Activated naive CD4-positive, alpha-beta T cell treated with anti-CD3 and anti-CD28 coated beads for 36 hours (primary cell): ENCODE measurements at regions of chr15 and their contacts with region 1.

Region 1: GRCh38 chr15:62150445-62150844 is 14.6 kb downstream of the C2CD4B start:
- DNase-seq: no peak
- H3K4me3 Mint-ChIP-seq: no peak overlapping the region
- H3K27ac Mint-ChIP-seq: no peak overlapping the region
- H3K4me1 Mint-ChIP-seq: peaks cover 37% of the 10 kb centered on the region
- H3K27me3 Mint-ChIP-seq: peaks cover 4% of the 10 kb centered on the region

Region 2: GRCh38 chr15:61923173-61923572 is 227.3 kb before region 1 on chr15:
- CTCF ChIA-PET with region 1: no interaction called
- intact Hi-C with region 1: no loop called
- DNase-seq: no peak
- H3K4me3 Mint-ChIP-seq: no peak overlapping the region
- H3K27ac Mint-ChIP-seq: no peak overlapping the region
- H3K4me1 Mint-ChIP-seq: no peaks in the 10 kb centered on the region
- H3K27me3 Mint-ChIP-seq: no peaks in the 10 kb centered on the region

Region 3: GRCh38 chr15:62087671-62088352 is 62.6 kb before region 1 on chr15:
- CTCF ChIA-PET with region 1: no interaction called
- intact Hi-C with region 1: loop called (anchors 5 kb)
- DNase-seq: peak; percentile 12
- H3K4me3 Mint-ChIP-seq: no peak overlapping the region
- H3K27ac Mint-ChIP-seq: no peak overlapping the region
- H3K4me1 Mint-ChIP-seq: peaks cover 2% of the 10 kb centered on the region
- H3K27me3 Mint-ChIP-seq: no peaks in the 10 kb centered on the region

Region 4: DNA sequence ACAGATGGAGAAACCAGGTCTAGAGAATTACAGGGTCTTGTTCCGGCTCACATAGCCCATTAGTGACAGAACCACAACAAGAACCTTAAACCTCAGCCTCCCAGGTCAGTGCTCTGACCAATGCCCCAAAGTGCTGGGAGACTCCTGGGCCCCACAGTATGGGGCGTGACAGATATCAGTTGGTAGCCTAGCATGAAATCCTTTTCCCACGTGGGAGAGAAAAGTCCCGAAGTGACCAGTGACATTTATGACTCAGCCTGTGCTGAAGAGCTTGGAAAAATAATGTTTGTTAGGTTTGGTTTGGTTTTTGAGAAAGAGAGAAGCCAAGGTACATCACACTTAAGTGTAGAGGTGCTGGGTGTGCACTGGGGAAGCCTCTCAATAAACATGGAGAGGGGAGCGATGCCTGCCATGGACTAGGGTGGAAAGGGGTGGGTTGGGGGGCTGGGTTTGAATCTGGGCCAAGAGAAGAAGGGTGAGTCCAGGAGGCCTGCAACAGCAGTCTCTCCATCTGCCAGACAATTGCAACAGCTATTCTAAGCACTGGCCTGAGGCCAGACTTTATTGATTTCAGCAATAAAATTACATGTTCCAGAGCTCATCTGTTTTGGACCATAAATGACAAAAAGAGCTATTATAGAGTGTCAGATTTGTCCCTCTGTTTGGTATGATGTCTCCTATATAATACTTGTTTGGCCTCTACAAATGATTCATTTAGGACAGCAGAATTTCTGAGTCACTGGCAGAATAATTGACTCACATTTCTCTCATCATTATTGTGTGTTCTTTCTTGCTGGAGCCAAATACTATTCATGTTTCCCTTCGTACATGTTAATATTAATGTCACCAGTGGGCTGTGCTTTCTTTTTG is 40.2 kb before region 1 on chr15:
- CTCF ChIA-PET with region 1: no interaction called
- intact Hi-C with region 1: loop called (anchors 5 kb)
- DNase-seq: no peak
- H3K4me3 Mint-ChIP-seq: no peak overlapping the region
- H3K27ac Mint-ChIP-seq: peak overlapping the region; percentile 57
- H3K4me1 Mint-ChIP-seq: peaks cover 16% of the 10 kb centered on the region
- H3K27me3 Mint-ChIP-seq: peaks cover 12% of the 10 kb centered on the region

Region 5: DNA sequence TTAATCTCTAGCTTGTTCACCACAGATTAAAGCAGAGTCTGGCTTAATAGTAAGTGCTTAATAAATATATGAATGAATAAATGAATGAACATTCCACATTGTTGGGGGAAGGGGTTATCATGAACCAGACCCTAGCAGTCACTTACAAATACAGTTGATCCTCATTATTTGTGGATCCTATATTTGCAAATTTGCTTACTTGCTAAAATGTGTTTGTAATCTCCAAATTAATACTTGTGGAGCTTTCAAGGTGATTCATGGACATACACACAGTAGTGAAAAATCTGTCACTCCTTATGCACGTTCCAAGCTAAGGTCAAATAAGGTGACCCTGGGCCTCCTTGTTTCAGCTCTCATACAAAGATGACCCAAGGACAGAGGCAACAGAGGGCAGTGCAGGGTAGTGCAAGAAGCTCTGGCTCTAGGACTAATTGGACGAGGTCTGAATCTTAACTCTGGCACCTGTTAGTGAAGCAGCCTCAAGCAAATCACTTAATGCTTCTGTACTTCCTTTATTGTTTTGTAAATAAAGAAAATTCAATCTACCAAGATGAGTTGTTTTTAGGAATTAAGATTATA is 127.5 kb after region 1 on chr15:
- CTCF ChIA-PET with region 1: no interaction called
- intact Hi-C with region 1: no loop called
- DNase-seq: no peak
- H3K4me3 Mint-ChIP-seq: no peak overlapping the region
- H3K27ac Mint-ChIP-seq: no peak overlapping the region
- H3K4me1 Mint-ChIP-seq: no peaks in the 10 kb centered on the region
- H3K27me3 Mint-ChIP-seq: peaks cover 14% of the 10 kb centered on the region